IMR-90 (cell line): ENCODE measurements at regions of chr11 and their contacts with region 1.

Region 1: DNA sequence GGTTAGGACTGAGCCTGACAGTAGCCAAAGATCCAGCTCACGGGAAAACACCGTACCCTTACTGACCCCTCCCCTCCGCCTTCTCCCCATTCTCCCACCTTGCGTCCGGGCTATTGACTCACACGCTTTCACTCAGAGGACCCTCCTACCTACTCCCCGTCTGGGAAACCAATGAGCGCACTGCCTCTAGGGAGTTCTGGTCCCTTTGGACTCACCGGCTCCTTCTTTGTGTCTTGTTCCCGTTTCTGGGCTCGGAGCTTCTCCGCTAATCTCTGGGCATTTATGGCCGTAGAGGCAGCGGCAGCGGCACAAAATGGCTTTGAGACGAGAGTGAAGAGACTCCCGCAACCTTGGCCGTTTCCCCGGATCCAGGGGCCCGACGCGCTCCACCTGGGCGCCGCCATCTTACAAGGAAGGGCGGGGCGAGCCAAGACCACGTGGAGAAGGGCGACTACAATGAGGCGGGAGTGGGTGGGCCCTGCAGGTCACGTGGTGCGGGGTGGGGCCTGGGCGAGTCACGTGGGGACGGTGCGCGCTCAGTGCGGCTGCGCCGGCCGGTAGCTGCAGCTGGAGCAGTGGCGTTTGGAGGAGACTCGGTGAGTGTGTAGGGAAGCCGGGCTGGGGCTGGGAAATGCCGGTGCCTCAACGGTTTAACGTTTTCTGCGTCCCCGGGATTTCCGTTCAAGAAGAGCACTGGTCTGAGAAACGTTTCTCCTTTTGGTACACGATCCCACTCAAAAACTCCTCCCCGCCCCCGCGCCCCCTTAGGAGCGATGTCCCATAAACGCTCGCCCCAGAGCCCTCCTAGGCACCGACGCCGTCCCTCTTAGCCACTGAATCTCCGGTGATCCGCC is at the starts of genes FAM118B and RPUSD4:
- DNase-seq: peak; percentile 96
- ATAC-seq: peak; percentile 95
- H3K4me3 ChIP-seq: peak within 1 kb of the TSS; percentile 72
- H3K27ac ChIP-seq: peak within 1 kb of the TSS; percentile 65
- H3K4me1 ChIP-seq: no peaks in the 10 kb centered on the region
- H3K27me3 ChIP-seq: no peaks in the 10 kb centered on the region
- CTCF ChIP-seq: no peak
- POLR2A ChIP-seq: peak; percentile 81
- RAD21 ChIP-seq: no peak
- total RNA-seq, gene FAM118B: 27.2 and 29.4 TPM in 2 replicates
- total RNA-seq, gene RPUSD4: 30.6 and 31.4 TPM in 2 replicates

Region 2: GRCh38 chr11:125902927-125903710 is 308.3 kb before region 1 on chr11 and contains the start of gene PUS3:
- CTCF ChIA-PET with region 1: no interaction called
- POLR2A ChIA-PET with region 1: no interaction called
- dilution Hi-C with region 1: loop called (anchors 25 kb)
- in situ Hi-C with region 1: no loop called
- intact Hi-C with region 1: no loop called
- DNase-seq: peak; percentile 78
- ATAC-seq: peak; percentile 98
- H3K4me3 ChIP-seq: peak within 1 kb of the TSS; percentile 96
- H3K27ac ChIP-seq: peak within 1 kb of the TSS; percentile 42
- H3K4me1 ChIP-seq: 0 out of 2 replicates have a peak, but pooled peaks cover 2% of the 10 kb centered on the region
- H3K27me3 ChIP-seq: peaks cover 18% of the 10 kb centered on the region
- CTCF ChIP-seq: no peak
- POLR2A ChIP-seq: no peak
- RAD21 ChIP-seq: no peak
- total RNA-seq, gene PUS3: 11.7 and 16.4 TPM in 2 replicates

Region 3: GRCh38 chr11:125987066-125987641 is 224.3 kb before region 1 on chr11:
- CTCF ChIA-PET with region 1: no interaction called
- POLR2A ChIA-PET with region 1: no interaction called
- dilution Hi-C with region 1: no loop called
- in situ Hi-C with region 1: no loop called
- intact Hi-C with region 1: no loop called
- DNase-seq: no peak
- ATAC-seq: no peak
- H3K4me3 ChIP-seq: no peak overlapping the region
- H3K27ac ChIP-seq: no peak overlapping the region
- H3K4me1 ChIP-seq: peaks cover 4% of the 10 kb centered on the region; the same call in 1 of the 2 replicates
- H3K27me3 ChIP-seq: no peaks in the 10 kb centered on the region
- CTCF ChIP-seq: no peak
- POLR2A ChIP-seq: no peak
- RAD21 ChIP-seq: no peak

Region 4: DNA sequence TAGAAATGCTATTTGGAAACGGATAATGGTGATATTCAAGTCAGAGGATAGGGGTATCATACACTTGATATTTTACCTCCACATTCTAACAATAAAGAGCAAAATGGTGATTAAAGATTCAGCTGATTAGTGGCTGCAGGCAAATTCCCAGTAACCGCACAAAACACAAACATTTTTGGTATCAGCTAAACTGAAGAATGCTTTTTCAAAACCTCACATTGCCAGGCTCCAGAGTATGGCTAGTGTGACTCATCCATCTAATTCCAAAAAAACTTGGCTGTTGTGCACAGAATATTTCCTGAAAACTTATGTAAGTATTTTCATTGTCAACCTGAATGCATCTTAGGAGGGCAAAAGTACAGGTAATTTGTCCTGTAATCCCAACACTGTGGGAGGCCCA is 46.3 kb after region 1 on chr11:
- CTCF ChIA-PET with region 1: no interaction called
- POLR2A ChIA-PET with region 1: no interaction called
- dilution Hi-C with region 1: no loop called
- in situ Hi-C with region 1: no loop called
- intact Hi-C with region 1: loop called (anchors 5 kb)
- DNase-seq: peak; percentile 70
- ATAC-seq: peak; percentile 84
- H3K4me3 ChIP-seq: no peak overlapping the region
- H3K27ac ChIP-seq: no peak overlapping the region
- H3K4me1 ChIP-seq: peaks cover 3% of the 10 kb centered on the region
- H3K27me3 ChIP-seq: no peaks in the 10 kb centered on the region
- CTCF ChIP-seq: no peak
- POLR2A ChIP-seq: no peak
- RAD21 ChIP-seq: no peak